Activated CD4-positive, alpha-beta memory T cell treated with anti-CD3 and anti-CD28 coated beads, Interleukin-2, amount 10 ng/mL, durations not matched to agents 7 days and 5 days (primary cell): ENCODE measurements at regions of chr1 and their contacts with region 1.

Region 1: DNA sequence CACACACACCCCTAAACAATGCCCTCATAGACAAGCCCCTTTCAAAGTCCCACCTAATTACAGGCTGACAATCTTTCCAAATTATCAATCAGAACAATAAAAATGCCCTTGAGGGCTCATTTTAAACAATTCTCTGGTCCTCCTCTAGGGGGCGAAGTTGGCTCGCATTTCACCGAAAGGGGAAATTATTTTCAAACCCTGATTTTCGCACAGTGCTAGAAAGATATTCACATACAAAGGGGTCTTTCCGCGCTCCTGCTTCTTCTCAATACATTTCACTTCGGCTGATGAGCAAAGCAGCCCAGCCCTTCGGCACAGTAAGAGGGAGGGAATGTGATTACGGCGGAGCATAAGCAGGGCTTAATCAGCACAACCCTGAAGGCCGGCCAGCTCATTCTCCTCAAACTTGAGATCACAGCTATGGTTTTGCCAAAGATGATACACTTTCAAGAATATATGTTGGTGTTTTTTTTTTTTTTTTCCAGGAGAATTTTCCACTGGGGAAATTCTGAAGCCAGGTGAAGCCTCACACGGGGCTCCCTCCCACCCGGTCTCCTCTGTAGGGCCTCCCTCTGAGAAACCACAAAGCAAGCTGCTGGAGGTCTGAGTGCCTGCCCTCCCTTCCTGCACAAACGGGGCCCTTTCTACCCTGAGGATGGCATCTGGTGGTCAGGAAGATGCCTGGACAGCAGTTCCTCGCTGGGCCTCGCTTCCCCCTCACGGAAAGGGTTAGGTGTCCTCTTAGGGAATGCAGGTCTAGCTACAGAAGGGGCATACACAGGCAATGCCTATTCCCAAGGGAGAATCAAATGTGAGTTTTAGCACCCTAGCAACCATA is 66.9 kb downstream of the GNG12 start:
- DNase-seq: peak; percentile 33
- H3K4me3 Mint-ChIP-seq: no peak overlapping the region
- H3K27ac Mint-ChIP-seq: no peak overlapping the region
- H3K4me1 Mint-ChIP-seq: peaks cover 3% of the 10 kb centered on the region
- H3K27me3 Mint-ChIP-seq: peaks cover 47% of the 10 kb centered on the region

Region 2: GRCh38 chr1:67561704-67562113 is 204.7 kb before region 1 on chr1:
- CTCF ChIA-PET with region 1: interaction called, 123 read pairs
- POLR2A ChIA-PET with region 1: no interaction called
- DNase-seq: peak; percentile 85
- H3K4me3 Mint-ChIP-seq: no peak overlapping the region
- H3K27ac Mint-ChIP-seq: no peak overlapping the region
- H3K4me1 Mint-ChIP-seq: peaks cover 6% of the 10 kb centered on the region
- H3K27me3 Mint-ChIP-seq: peaks cover 2% of the 10 kb centered on the region

Region 3: DNA sequence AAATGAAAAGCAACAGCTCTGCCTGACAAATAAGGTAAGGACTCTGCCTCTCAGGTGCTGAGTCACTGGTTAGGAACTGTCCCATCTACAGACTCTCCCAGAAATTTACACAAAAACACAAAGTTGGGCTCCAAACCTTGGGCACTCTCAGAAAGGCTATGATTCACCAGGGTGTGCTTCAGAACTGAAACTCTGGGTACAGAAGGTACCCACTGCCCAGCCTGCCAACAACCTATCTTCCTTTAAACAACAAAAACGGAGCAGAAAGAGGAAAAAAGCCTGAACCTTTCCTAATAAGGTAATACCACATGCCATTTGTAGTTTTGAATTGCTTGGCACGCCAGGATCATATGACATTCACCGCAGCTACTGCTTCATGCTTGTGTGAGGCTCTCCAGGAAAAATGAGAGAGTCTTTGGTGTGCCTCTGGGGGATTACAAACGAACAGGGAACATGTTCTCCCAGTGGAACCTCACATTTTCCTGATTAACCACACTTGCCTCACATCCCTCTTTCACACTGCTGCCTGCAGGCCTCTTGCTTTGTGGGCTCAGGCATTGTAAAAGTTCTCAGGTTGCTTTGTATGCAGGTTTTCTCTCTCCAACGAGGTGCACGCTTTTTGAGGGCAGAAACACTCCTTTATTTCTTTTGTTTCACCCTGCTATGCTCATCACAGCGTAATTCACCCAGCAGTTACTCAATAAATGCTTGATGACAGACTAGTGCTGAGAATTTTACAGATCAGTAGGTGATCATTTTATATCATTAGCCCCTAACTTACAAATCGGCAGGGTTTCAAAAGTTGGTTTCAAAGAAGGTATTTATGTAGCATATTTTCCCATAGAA is 16.3 kb before region 1 on chr1:
- CTCF ChIA-PET with region 1: interaction called, 14 read pairs
- POLR2A ChIA-PET with region 1: no interaction called
- DNase-seq: no peak
- H3K4me3 Mint-ChIP-seq: no peak overlapping the region
- H3K27ac Mint-ChIP-seq: no peak overlapping the region
- H3K4me1 Mint-ChIP-seq: peaks cover 30% of the 10 kb centered on the region
- H3K27me3 Mint-ChIP-seq: peaks cover 12% of the 10 kb centered on the region